CD4-positive, alpha-beta T cell (primary cell): ENCODE measurements at regions of chr15 and their contacts with region 1.

Region 1: DNA sequence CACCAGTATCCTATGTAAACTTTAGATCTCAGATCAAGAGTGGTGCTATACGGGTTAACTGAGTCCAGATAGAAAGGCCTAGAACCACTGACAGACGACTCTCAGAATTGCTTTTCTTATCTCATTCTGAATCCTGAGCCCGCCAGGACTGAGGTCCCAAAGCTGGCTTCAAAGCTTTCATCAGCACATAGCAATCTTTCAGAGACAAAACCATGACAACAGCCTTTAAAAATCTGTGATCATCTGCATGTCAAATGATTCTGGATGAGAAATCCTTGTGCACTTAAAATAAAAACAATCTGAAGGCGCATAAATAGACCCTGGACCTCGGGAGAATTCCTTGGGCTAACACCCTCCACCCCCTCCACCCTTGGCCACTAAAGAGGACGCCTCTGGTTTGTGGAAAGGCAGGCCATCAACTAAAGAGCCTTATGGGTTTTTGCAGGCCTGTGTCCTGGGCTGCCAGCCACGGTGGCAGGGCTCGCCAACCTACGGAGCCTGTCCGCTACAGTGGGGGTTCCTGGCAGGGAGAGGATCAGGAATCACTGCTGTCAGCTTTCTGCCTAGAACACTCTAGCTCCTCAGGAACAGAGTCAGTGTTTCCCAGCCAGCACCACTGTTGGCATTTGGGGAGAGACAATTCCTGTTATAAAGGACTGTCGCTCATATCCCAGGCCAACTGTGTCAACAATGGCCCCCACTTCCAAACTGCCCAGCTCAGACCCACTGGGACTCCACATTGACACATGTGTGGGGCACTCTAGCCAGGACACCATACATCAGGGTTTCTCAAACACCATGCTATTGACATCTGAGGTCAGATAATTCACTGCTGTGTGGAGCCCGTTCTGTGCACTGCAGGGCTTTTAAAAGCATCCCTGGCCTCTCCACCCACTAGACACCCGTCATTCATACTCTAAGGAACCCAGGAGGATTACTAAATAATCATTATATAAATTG is 20.2 kb downstream of the TLE3 start:
- DNase-seq: no peak
- ATAC-seq: no peak
- H3K4me3 ChIP-seq: no peak overlapping the region
- H3K4me3 Mint-ChIP-seq: no peak overlapping the region
- H3K27ac ChIP-seq: no peak overlapping the region
- H3K27ac Mint-ChIP-seq: peak overlapping the region; percentile 19
- H3K4me1 ChIP-seq: peaks cover 10% of the 10 kb centered on the region
- H3K4me1 Mint-ChIP-seq: peaks cover 54% of the 10 kb centered on the region
- H3K27me3 ChIP-seq: no peaks in the 10 kb centered on the region
- H3K27me3 Mint-ChIP-seq: no peaks in the 10 kb centered on the region
- CTCF ChIP-seq: no peak

Region 2: GRCh38 chr15:70132139-70132538 is 54.7 kb after region 1 on chr15:
- CTCF ChIA-PET with region 1: no interaction called
- POLR2A ChIA-PET with region 1: no interaction called
- intact Hi-C with region 1: loop called in 1 of 2 experiments (anchors 10 kb)
- DNase-seq: no peak
- ATAC-seq: no peak
- H3K4me3 ChIP-seq: no peak overlapping the region
- H3K4me3 Mint-ChIP-seq: no peak overlapping the region
- H3K27ac ChIP-seq: no peak overlapping the region
- H3K27ac Mint-ChIP-seq: no peak overlapping the region
- H3K4me1 ChIP-seq: no peaks in the 10 kb centered on the region
- H3K4me1 Mint-ChIP-seq: no peaks in the 10 kb centered on the region
- H3K27me3 ChIP-seq: no peaks in the 10 kb centered on the region
- H3K27me3 Mint-ChIP-seq: no peaks in the 10 kb centered on the region
- CTCF ChIP-seq: no peak